Endothelial cell of umbilical vein (primary cell): ENCODE measurements at regions of chr2 and their contacts with region 1.

Region 1: GRCh38 chr2:234500394-234501006 is 3.6 kb upstream of the ARL4C start:
- DNase-seq: peak; percentile 61
- H3K4me3 ChIP-seq: no peak overlapping the region
- H3K27ac ChIP-seq: no peak overlapping the region
- H3K4me1 ChIP-seq: peaks cover 3% of the 10 kb centered on the region
- H3K27me3 ChIP-seq: peaks cover 0 to 2% of the 10 kb centered on the region in 2 experiments
- CTCF ChIP-seq: peak; percentile 51 to 58
- POLR2A ChIP-seq: no peak

Region 2: GRCh38 chr2:233854241-233854981 is 646.1 kb before region 1 on chr2 and contains the start of gene HJURP:
- CTCF ChIA-PET with region 1: no interaction called
- POLR2A ChIA-PET with region 1: no interaction called
- dilution Hi-C with region 1: no loop called
- intact Hi-C with region 1: loop called (anchors 2 kb)
- DNase-seq: peak; percentile 98
- H3K4me3 ChIP-seq: peak within 1 kb of the TSS; percentile 88 to 98 (median 89)
- H3K27ac ChIP-seq: peak within 1 kb of the TSS; percentile 73
- H3K4me1 ChIP-seq: peaks cover 20% of the 10 kb centered on the region
- H3K27me3 ChIP-seq: no peaks in the 10 kb centered on the region
- CTCF ChIP-seq: no peak
- POLR2A ChIP-seq: peak; percentile 68
- total RNA-seq, gene HJURP: 42.4 and 60.9 TPM in 2 replicates

Region 3: GRCh38 chr2:233976690-233977294 is 523.7 kb before region 1 on chr2:
- CTCF ChIA-PET with region 1: interaction called, 10 read pairs
- POLR2A ChIA-PET with region 1: no interaction called
- dilution Hi-C with region 1: no loop called
- intact Hi-C with region 1: no loop called
- DNase-seq: peak; percentile 57
- H3K4me3 ChIP-seq: no peak overlapping the region
- H3K27ac ChIP-seq: no peak overlapping the region
- H3K4me1 ChIP-seq: peaks cover 13% of the 10 kb centered on the region
- H3K27me3 ChIP-seq: peaks cover 0 to 3% of the 10 kb centered on the region in 2 experiments
- CTCF ChIP-seq: peak; percentile 4 to 22
- POLR2A ChIP-seq: no peak

Region 4: GRCh38 chr2:234203135-234203984 is 297.1 kb before region 1 on chr2:
- CTCF ChIA-PET with region 1: interaction called, 3 read pairs
- POLR2A ChIA-PET with region 1: no interaction called
- dilution Hi-C with region 1: no loop called
- intact Hi-C with region 1: loop called (anchors 2 kb)
- DNase-seq: peak; percentile 98
- H3K4me3 ChIP-seq: peak overlapping the region in 1 of 3 experiments; percentile 14
- H3K27ac ChIP-seq: peak overlapping the region; percentile 93
- H3K4me1 ChIP-seq: peaks cover 17% of the 10 kb centered on the region
- H3K27me3 ChIP-seq: no peaks in the 10 kb centered on the region
- CTCF ChIP-seq: no peak
- POLR2A ChIP-seq: no peak

Region 5: DNA sequence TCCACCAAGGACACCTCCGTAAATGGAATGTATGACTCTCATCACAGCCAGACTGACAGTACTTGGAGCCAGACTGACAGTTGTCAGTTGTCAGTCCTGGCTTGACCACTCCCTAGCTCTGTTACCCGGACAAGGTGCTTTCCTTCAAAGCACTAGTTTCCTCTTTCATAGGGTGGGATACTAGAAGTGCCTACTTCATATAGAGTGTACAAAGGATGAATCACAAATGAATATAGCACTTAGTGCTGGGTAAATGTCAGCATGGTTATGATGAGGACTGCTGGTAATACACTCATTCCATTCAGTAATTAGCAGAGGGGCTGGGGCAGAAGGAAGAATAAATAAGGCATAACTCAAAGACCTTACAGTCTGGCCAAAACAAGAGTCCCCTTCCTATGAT is 95.0 kb before region 1 on chr2:
- CTCF ChIA-PET with region 1: interaction called, 7 read pairs
- POLR2A ChIA-PET with region 1: no interaction called
- dilution Hi-C with region 1: no loop called
- intact Hi-C with region 1: loop called (anchors 1 kb)
- DNase-seq: no peak
- H3K4me3 ChIP-seq: no peak overlapping the region
- H3K27ac ChIP-seq: peak overlapping the region; percentile 4
- H3K4me1 ChIP-seq: peaks cover 14% of the 10 kb centered on the region
- H3K27me3 ChIP-seq: peaks cover 0 to under 1% of the 10 kb centered on the region in 2 experiments
- CTCF ChIP-seq: no peak
- POLR2A ChIP-seq: no peak

Region 6: GRCh38 chr2:234705108-234705507 is 204.6 kb after region 1 on chr2:
- CTCF ChIA-PET with region 1: no interaction called
- POLR2A ChIA-PET with region 1: no interaction called
- dilution Hi-C with region 1: no loop called
- intact Hi-C with region 1: no loop called
- DNase-seq: no peak
- H3K4me3 ChIP-seq: no peak overlapping the region
- H3K27ac ChIP-seq: no peak overlapping the region
- H3K4me1 ChIP-seq: no peaks in the 10 kb centered on the region
- H3K27me3 ChIP-seq: peaks cover 0 to 13% of the 10 kb centered on the region in 2 experiments
- CTCF ChIP-seq: no peak
- POLR2A ChIP-seq: no peak